ENCODE measurements at regions of chr2 and their contacts with region 1.

Region 1: GRCh38 chr2:47336259-47337238 is 66.4 kb upstream of the MSH2 start:
- DNase-seq: peak; percentile 55 to 69
- H3K4me3 ChIP-seq: no peak overlapping the region
- H3K4me3 Mint-ChIP-seq: peak overlapping the region; percentile 23
- H3K27ac Mint-ChIP-seq: peak overlapping the region; percentile 62
- H3K4me1 ChIP-seq: peaks cover 38% of the 10 kb centered on the region
- H3K4me1 Mint-ChIP-seq: peaks cover 32% of the 10 kb centered on the region
- H3K27me3 ChIP-seq: no peaks in the 10 kb centered on the region
- H3K27me3 Mint-ChIP-seq: no peaks in the 10 kb centered on the region
- CTCF ChIP-seq: no peak

Region 2: GRCh38 chr2:47357483-47357882 is 20.9 kb after region 1 on chr2:
- CTCF ChIA-PET with region 1: interaction called, 11 read pairs
- POLR2A ChIA-PET with region 1: no interaction called
- intact Hi-C with region 1: no loop called
- DNase-seq: no peak
- H3K4me3 ChIP-seq: no peak overlapping the region
- H3K4me3 Mint-ChIP-seq: no peak overlapping the region
- H3K27ac Mint-ChIP-seq: peak overlapping the region; percentile 39
- H3K4me1 ChIP-seq: peaks cover 38% of the 10 kb centered on the region
- H3K4me1 Mint-ChIP-seq: peaks cover 27% of the 10 kb centered on the region
- H3K27me3 ChIP-seq: no peaks in the 10 kb centered on the region
- H3K27me3 Mint-ChIP-seq: no peaks in the 10 kb centered on the region
- CTCF ChIP-seq: no peak

Region 3: GRCh38 chr2:47373747-47374146 is 37.2 kb after region 1 on chr2:
- CTCF ChIA-PET with region 1: interaction called, 49 read pairs
- POLR2A ChIA-PET with region 1: interaction called, 9 read pairs
- intact Hi-C with region 1: loop called (anchors 1 kb)
- DNase-seq: peak; percentile 74 to 78
- H3K4me3 ChIP-seq: no peak overlapping the region
- H3K4me3 Mint-ChIP-seq: no peak overlapping the region
- H3K27ac Mint-ChIP-seq: no peak overlapping the region
- H3K4me1 ChIP-seq: peaks cover 30% of the 10 kb centered on the region
- H3K4me1 Mint-ChIP-seq: peaks cover 11% of the 10 kb centered on the region
- H3K27me3 ChIP-seq: no peaks in the 10 kb centered on the region
- H3K27me3 Mint-ChIP-seq: no peaks in the 10 kb centered on the region
- CTCF ChIP-seq: peak; percentile 47 to 83

Region 4: DNA sequence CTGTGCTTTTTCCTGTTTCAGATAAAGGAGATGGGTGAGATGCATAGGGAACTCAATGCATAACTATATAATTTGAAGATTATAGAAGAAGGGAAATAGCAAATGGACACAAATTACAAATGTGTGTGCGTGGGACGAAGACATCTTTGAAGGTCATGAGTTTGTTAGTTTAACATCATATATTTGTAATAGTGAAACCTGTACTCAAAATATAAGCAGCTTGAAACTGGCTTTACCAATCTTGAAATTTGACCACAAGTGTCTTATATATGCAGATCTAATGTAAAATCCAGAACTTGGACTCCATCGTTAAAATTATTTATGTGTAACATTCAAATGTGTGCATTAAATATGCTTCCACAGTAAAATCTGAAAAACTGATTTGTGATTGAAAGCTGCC is 50.0 kb after region 1 on chr2:
- CTCF ChIA-PET with region 1: interaction called, 140 read pairs
- POLR2A ChIA-PET with region 1: interaction called, 8 read pairs
- intact Hi-C with region 1: loop called (anchors 1 kb)
- DNase-seq: no peak
- H3K4me3 ChIP-seq: no peak overlapping the region
- H3K4me3 Mint-ChIP-seq: no peak overlapping the region
- H3K27ac Mint-ChIP-seq: no peak overlapping the region
- H3K4me1 ChIP-seq: no peaks in the 10 kb centered on the region
- H3K4me1 Mint-ChIP-seq: no peaks in the 10 kb centered on the region
- H3K27me3 ChIP-seq: no peaks in the 10 kb centered on the region
- H3K27me3 Mint-ChIP-seq: no peaks in the 10 kb centered on the region
- CTCF ChIP-seq: no peak

Region 5: GRCh38 chr2:47402805-47403608 is 66.5 kb after region 1 on chr2 and contains the start of gene MSH2:
- CTCF ChIA-PET with region 1: interaction called, 15 read pairs
- POLR2A ChIA-PET with region 1: interaction called, 11 read pairs
- intact Hi-C with region 1: no loop called
- DNase-seq: peak; percentile 96
- H3K4me3 ChIP-seq: peak within 1 kb of the TSS; percentile 85
- H3K4me3 Mint-ChIP-seq: peak within 1 kb of the TSS; percentile 97
- H3K27ac Mint-ChIP-seq: peak within 1 kb of the TSS; percentile 91
- H3K4me1 ChIP-seq: peaks cover 6% of the 10 kb centered on the region
- H3K4me1 Mint-ChIP-seq: peaks cover 9% of the 10 kb centered on the region
- H3K27me3 ChIP-seq: no peaks in the 10 kb centered on the region
- H3K27me3 Mint-ChIP-seq: no peaks in the 10 kb centered on the region
- CTCF ChIP-seq: peak in 1 of 2 experiments; percentile 3
- total RNA-seq, gene MSH2: 70.5 and 72.5 TPM in 2 replicates

Region 6: DNA sequence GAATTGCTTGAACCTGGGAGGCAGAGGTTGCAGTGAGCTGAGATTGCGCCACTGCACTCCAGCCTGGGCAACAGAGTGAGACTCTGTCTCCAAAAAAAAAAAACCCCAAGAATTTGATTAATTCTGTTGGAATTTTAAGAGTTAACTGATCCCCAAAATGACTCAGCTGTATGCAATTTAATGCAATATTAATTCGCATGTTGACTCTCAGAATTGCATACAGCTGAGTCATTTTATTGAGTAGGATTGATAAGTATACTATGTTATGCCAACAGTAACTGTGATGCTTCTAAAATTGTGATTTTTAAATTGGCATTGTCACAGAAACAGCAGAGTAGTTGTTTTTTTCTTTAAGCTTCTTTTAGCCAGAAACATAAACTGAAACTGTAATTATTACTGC is 86.0 kb after region 1 on chr2:
- CTCF ChIA-PET with region 1: no interaction called
- POLR2A ChIA-PET with region 1: no interaction called
- intact Hi-C with region 1: no loop called
- DNase-seq: no peak
- H3K4me3 ChIP-seq: no peak overlapping the region
- H3K4me3 Mint-ChIP-seq: no peak overlapping the region
- H3K27ac Mint-ChIP-seq: no peak overlapping the region
- H3K4me1 ChIP-seq: no peaks in the 10 kb centered on the region
- H3K4me1 Mint-ChIP-seq: no peaks in the 10 kb centered on the region
- H3K27me3 ChIP-seq: no peaks in the 10 kb centered on the region
- H3K27me3 Mint-ChIP-seq: no peaks in the 10 kb centered on the region
- CTCF ChIP-seq: no peak

Region 7: GRCh38 chr2:47510745-47511144 is 174.2 kb after region 1 on chr2:
- CTCF ChIA-PET with region 1: no interaction called
- POLR2A ChIA-PET with region 1: no interaction called
- intact Hi-C with region 1: no loop called
- DNase-seq: no peak
- H3K4me3 ChIP-seq: no peak overlapping the region
- H3K4me3 Mint-ChIP-seq: no peak overlapping the region
- H3K27ac Mint-ChIP-seq: no peak overlapping the region
- H3K4me1 ChIP-seq: no peaks in the 10 kb centered on the region
- H3K4me1 Mint-ChIP-seq: no peaks in the 10 kb centered on the region
- H3K27me3 ChIP-seq: no peaks in the 10 kb centered on the region
- H3K27me3 Mint-ChIP-seq: peaks cover 7% of the 10 kb centered on the region
- CTCF ChIP-seq: peak in 1 of 2 experiments; percentile 2

Region 8: DNA sequence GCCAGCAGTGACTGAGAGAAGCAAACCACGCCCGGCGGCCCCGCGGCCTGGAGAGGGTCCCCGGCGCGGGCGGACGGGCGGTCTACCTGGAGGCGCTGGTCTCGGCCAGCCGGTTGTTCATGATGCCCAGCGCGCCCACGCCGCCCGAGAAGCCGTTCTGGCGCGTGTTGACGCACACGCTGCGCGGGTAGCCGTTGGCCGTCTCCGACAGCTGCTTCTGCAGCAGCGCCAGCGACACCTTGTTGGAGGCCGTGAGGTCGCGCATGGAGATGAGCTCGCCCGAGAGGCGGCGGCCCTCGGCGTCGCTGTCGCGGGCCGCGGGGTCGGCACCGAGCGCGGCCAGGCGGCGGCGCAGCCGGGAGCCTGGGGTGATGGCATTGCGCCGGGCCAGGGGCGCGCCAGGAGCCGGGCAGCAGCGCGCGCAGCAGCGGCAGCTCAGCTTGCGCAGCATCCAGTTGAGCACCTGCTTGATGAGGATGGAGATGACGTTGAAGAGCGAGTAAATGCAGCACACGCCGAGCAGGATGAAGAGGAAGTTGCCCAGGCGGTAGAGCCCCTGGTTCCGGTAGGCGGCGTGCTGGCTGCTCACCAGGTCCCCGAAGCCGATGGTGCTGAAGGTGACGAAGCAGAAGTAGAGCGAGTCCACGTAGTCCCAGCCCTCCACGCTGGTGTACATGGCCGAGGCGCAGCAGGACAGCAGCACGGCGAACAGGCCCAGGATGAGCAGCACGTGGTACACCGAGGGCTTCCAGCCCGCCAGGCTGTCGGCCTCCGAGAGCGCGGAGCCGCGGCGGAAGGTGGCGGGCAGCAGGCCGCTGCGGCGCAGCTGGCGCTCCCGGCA is 184.5 kb after region 1 on chr2:
- CTCF ChIA-PET with region 1: interaction called, 8 read pairs
- POLR2A ChIA-PET with region 1: no interaction called
- intact Hi-C with region 1: loop called (anchors 2 kb)
- DNase-seq: peak; percentile 77 to 79
- H3K4me3 ChIP-seq: peak overlapping the region; percentile 45
- H3K4me3 Mint-ChIP-seq: peak overlapping the region; percentile 76
- H3K27ac Mint-ChIP-seq: no peak overlapping the region
- H3K4me1 ChIP-seq: no peaks in the 10 kb centered on the region
- H3K4me1 Mint-ChIP-seq: no peaks in the 10 kb centered on the region
- H3K27me3 ChIP-seq: no peaks in the 10 kb centered on the region
- H3K27me3 Mint-ChIP-seq: peaks cover 9% of the 10 kb centered on the region
- CTCF ChIP-seq: peak; percentile 50 to 55

Measured in Caco-2 (cell line).